Activated CD8-positive, alpha-beta T cell treated with anti-CD3 and anti-CD28 coated beads for 36 hours (primary cell): ENCODE measurements at regions of chr1 and their contacts with region 1.

Region 1: DNA sequence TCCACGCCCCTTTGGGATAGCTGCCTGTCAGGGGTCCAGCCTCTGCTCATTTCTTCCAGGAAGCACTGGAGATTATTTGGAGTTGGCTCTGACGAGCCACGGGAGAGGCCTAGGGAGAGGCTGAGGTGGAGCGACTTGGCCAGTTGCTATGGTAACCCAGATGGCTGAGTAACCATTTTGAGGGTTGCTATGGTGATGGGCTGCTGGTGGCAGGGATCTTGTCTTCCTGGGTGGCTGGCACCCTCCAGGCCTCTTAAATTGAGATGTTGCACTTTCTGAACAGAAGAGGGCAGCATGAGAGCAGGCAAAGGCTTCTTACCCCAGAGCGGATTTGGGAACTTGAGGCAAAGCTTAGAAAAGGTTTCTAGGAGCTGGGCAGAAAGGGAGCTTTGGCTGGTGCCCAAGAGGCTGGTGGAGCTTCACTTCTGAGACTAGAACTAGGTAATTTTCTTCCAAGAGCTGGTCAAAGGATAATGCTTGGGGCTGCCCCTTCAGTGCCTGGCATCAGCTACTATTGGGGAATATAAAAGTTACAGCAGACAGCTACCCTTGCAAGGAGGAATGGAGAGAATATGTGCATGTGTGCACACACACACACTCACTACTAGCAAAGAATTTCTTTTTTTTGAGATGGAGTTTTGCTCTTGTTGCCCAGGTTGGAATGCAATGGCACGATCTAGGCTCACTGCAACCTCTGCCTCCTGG is 72.5 kb downstream of the NDUFS5 start:
- DNase-seq: peak; percentile 74
- ATAC-seq: peak; percentile 84
- H3K4me3 Mint-ChIP-seq: no peak overlapping the region
- H3K27ac Mint-ChIP-seq: no peak overlapping the region
- H3K4me1 Mint-ChIP-seq: peaks cover 22% of the 10 kb centered on the region
- H3K27me3 Mint-ChIP-seq: no peaks in the 10 kb centered on the region
- CTCF ChIP-seq: peak; percentile 76

Region 2: DNA sequence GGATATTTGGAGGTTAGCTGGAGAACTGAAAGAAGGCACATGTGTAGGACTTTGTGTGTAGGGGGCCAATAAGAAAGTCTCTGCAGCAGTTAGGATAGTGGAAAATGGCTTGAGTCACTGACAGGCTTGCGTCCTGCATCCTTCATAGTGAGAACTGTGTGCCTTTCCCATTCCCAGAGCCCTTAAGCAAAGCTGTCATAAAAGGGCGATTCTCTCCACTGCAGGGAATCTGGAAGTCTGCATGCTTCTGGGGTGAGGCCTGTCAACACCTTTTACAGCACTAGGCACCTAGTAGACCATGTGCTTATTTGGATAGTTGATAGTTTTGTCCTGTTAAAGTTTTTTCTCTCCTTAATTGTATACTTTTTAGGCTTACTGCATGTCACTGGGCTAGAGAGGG is 66.4 kb after region 1 on chr1:
- CTCF ChIA-PET with region 1: interaction called, 14 read pairs
- POLR2A ChIA-PET with region 1: no interaction called
- intact Hi-C with region 1: no loop called
- DNase-seq: no peak
- ATAC-seq: no peak
- H3K4me3 Mint-ChIP-seq: no peak overlapping the region
- H3K27ac Mint-ChIP-seq: no peak overlapping the region
- H3K4me1 Mint-ChIP-seq: peaks cover 26% of the 10 kb centered on the region
- H3K27me3 Mint-ChIP-seq: no peaks in the 10 kb centered on the region
- CTCF ChIP-seq: no peak

Region 3: DNA sequence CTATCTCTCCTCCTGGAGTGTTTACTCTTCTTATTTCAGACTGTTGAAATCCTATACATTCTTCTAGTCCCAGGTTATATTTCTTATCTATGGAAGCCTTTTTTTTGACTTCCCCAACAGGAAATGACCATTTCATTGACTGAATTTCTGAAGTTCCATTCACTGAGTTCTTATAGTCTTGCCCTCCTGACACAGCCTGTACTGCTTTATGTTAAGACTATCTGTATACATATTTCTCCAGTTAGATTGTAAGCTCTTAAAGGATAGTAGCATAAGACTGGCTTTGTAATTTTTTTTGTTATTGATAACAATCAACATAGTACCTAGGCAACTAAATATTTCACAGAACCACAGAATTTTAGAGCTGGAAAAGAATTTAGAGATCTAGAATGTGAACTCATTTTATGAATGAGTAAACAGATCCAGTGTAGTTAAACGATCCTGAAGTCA is 90.9 kb after region 1 on chr1:
- CTCF ChIA-PET with region 1: interaction called, 156 read pairs
- POLR2A ChIA-PET with region 1: interaction called, 5 read pairs
- intact Hi-C with region 1: loop called (anchors 5 kb)
- DNase-seq: no peak
- ATAC-seq: no peak
- H3K4me3 Mint-ChIP-seq: no peak overlapping the region
- H3K27ac Mint-ChIP-seq: peak overlapping the region; percentile 89
- H3K4me1 Mint-ChIP-seq: peaks cover 77% of the 10 kb centered on the region
- H3K27me3 Mint-ChIP-seq: no peaks in the 10 kb centered on the region
- CTCF ChIP-seq: no peak

Region 4: GRCh38 chr1:39275836-39276507 is 177.3 kb after region 1 on chr1:
- CTCF ChIA-PET with region 1: interaction called, 14 read pairs
- POLR2A ChIA-PET with region 1: no interaction called
- intact Hi-C with region 1: no loop called
- DNase-seq: no peak
- ATAC-seq: no peak
- H3K4me3 Mint-ChIP-seq: no peak overlapping the region
- H3K27ac Mint-ChIP-seq: no peak overlapping the region
- H3K4me1 Mint-ChIP-seq: peaks cover 53% of the 10 kb centered on the region
- H3K27me3 Mint-ChIP-seq: no peaks in the 10 kb centered on the region
- CTCF ChIP-seq: no peak

Region 5: DNA sequence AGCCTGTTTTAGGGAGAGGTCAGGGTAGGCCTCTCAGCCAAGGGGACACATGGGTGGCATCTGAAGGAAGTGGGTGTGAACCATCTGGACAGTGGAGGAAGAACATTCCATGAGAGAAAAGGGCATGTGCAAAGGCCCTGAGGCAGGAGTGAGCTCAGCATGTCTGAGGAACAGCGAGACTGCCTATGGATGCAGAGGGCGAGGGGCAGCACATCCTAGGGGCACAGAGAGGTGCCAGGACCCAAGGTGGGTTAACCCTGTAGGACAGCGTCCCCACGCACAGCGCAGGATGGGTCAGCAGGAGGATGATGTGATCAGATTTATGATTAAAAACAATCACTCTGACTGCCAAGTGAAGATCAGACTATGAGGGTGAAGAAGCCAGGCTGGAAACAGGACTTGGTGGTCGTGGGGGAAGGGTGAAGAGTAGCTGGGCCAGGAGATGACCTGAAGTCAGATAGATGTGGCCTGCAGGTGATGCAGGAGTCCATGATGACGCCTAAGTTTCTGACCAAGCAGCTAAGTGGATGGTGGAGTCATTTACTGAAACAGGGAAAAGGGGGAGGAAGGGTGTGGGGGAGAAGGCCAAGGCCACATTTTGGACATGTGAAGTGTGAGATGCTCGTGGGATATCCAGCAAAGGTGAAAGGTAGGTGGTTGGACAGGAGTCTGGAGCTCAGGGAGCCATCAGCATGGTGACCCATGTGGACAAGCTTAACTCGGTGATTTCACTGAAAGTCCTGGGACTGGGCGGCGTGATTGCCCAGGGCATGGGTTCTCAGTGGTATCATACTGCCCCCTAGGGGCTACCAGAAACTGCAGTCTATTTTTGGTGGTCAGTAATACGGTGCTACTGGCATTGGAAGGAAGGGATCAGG is 440.1 kb after region 1 on chr1:
- CTCF ChIA-PET with region 1: interaction called, 25 read pairs
- POLR2A ChIA-PET with region 1: no interaction called
- intact Hi-C with region 1: loop called (anchors 10 kb)
- DNase-seq: peak; percentile 62
- ATAC-seq: peak; percentile 90
- H3K4me3 Mint-ChIP-seq: no peak overlapping the region
- H3K27ac Mint-ChIP-seq: no peak overlapping the region
- H3K4me1 Mint-ChIP-seq: peaks cover 2% of the 10 kb centered on the region
- H3K27me3 Mint-ChIP-seq: no peaks in the 10 kb centered on the region
- CTCF ChIP-seq: peak; percentile 90